Activated T-helper 1 cell treated with anti-CD3 and anti-CD28 coated beads, Interleukin-12 subunit alpha, Interleukin-12 subunit beta, Interleukin-2, Interleukin-4 antibody, amounts not matched to agents 30 ng/mL and 10 ng/mL and 1 ng/mL, durations not matched to agents 14 hours and 24 hours and 36 hours (primary cell): ENCODE measurements at regions of chr6 and their contacts with region 1.

Region 1: DNA sequence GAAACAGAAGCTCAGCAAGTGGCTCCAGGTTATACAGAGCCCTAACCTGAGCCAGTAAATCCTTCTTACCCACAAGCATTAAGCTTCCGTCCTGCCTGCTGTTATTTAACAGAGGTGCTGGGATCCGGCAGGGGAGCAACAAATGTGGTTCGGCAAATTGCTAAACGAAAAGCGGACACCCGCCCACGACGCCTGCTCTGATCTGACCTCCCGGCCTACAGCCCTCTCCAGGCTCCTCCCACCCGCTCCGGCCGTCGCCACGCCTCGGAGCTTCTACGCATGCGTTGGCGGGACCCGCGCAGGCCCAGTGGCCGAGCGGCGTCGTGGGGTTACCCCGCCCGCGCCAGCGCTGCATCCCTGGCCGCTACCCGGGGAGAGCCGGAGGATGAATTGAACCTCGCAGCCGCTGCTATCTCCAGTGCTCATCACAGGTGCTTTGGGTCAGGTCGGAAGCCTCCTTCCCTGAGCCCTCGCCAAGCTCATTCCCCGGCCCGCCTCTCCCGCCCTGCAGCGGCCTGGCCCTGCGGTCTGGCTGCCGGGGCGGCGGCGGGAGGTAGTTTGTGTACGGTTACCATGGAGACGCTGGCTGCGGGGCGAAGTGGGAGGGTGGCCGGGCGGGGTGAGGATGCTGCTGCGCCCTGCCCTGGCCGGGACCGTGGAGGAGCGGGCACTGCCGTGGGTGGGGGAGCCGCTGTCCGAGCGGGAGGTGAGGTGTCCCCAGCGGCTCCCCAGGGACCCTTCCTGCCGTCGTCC is at the start of gene ARMC2:
- DNase-seq: peak; percentile 88
- H3K4me3 Mint-ChIP-seq: peak within 1 kb of the TSS; percentile 89
- H3K27ac Mint-ChIP-seq: peak within 1 kb of the TSS; percentile 71
- H3K4me1 Mint-ChIP-seq: peaks cover 31% of the 10 kb centered on the region
- H3K27me3 Mint-ChIP-seq: peaks cover 25% of the 10 kb centered on the region
- total RNA-seq, gene ARMC2: 3.9 and 4.6 TPM in 2 replicates

Region 2: DNA sequence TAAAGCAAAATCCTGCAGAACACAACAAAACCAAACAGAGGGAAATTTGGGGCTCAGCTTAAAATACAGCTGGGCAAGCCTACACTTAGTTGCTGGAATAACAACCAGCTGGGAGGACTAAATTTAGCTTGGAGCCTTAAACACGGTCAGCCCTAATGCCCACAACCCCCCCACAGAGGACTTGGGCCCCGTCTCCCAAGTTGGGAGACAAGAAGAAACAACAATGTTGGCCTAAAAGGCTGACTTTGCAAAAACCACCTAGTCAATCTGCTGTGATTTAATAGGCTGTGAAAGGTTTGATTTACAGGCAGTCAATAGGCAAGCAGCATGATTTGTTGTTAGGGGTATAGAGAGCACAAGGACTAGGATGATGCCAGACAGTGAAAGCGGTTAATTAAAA is 40.4 kb before region 1 on chr6:
- intact Hi-C with region 1: no loop called
- DNase-seq: no peak
- H3K4me3 Mint-ChIP-seq: no peak overlapping the region
- H3K27ac Mint-ChIP-seq: no peak overlapping the region
- H3K4me1 Mint-ChIP-seq: peaks cover 14% of the 10 kb centered on the region
- H3K27me3 Mint-ChIP-seq: peaks cover 4% of the 10 kb centered on the region

Region 3: GRCh38 chr6:108835218-108835850 is 13.0 kb before region 1 on chr6:
- intact Hi-C with region 1: loop called (anchors 1 kb)
- DNase-seq: peak; percentile 74
- H3K4me3 Mint-ChIP-seq: no peak overlapping the region
- H3K27ac Mint-ChIP-seq: no peak overlapping the region
- H3K4me1 Mint-ChIP-seq: peaks cover 32% of the 10 kb centered on the region
- H3K27me3 Mint-ChIP-seq: peaks cover 16% of the 10 kb centered on the region

Region 4: GRCh38 chr6:108866798-108867197 is 18.5 kb after region 1 on chr6:
- intact Hi-C with region 1: loop called (anchors 2 kb)
- DNase-seq: no peak
- H3K4me3 Mint-ChIP-seq: no peak overlapping the region
- H3K27ac Mint-ChIP-seq: peak overlapping the region; percentile 37
- H3K4me1 Mint-ChIP-seq: peaks cover 32% of the 10 kb centered on the region
- H3K27me3 Mint-ChIP-seq: peaks cover 16% of the 10 kb centered on the region

Region 5: GRCh38 chr6:108874470-108875160 is 26.3 kb after region 1 on chr6:
- intact Hi-C with region 1: loop called (anchors 2 kb)
- DNase-seq: peak; percentile 51
- H3K4me3 Mint-ChIP-seq: peak overlapping the region; percentile 34
- H3K27ac Mint-ChIP-seq: peak overlapping the region; percentile 96
- H3K4me1 Mint-ChIP-seq: peaks cover 80% of the 10 kb centered on the region
- H3K27me3 Mint-ChIP-seq: peaks cover 4% of the 10 kb centered on the region

Region 6: DNA sequence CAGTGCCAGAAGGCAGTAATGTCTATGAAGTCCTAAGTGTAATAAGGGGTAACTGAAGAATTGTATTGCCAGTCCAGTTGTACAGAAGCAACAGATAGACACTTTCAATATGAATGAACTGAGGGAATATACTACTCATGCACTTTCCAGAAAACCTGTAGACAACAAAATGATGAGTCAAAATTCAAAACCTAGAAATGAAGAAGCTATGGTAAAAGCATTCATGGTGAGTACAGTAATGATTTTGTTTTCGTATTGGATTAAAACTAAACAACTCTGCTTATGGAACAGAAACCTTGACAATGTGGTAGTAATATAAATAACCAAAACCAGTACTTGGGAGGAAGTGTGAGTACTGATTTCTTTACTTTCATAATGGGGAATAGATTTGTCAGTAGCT is 34.9 kb after region 1 on chr6:
- intact Hi-C with region 1: loop called (anchors 1 kb)
- DNase-seq: no peak
- H3K4me3 Mint-ChIP-seq: peak overlapping the region; percentile 56
- H3K27ac Mint-ChIP-seq: peak overlapping the region; percentile 93
- H3K4me1 Mint-ChIP-seq: peaks cover 58% of the 10 kb centered on the region
- H3K27me3 Mint-ChIP-seq: peaks cover 28% of the 10 kb centered on the region

Region 7: GRCh38 chr6:108902382-108902792 is 54.1 kb after region 1 on chr6:
- intact Hi-C with region 1: no loop called
- DNase-seq: no peak
- H3K4me3 Mint-ChIP-seq: no peak overlapping the region
- H3K27ac Mint-ChIP-seq: peak overlapping the region; percentile 4
- H3K4me1 Mint-ChIP-seq: peaks cover 37% of the 10 kb centered on the region
- H3K27me3 Mint-ChIP-seq: peaks cover 10% of the 10 kb centered on the region

Region 8: DNA sequence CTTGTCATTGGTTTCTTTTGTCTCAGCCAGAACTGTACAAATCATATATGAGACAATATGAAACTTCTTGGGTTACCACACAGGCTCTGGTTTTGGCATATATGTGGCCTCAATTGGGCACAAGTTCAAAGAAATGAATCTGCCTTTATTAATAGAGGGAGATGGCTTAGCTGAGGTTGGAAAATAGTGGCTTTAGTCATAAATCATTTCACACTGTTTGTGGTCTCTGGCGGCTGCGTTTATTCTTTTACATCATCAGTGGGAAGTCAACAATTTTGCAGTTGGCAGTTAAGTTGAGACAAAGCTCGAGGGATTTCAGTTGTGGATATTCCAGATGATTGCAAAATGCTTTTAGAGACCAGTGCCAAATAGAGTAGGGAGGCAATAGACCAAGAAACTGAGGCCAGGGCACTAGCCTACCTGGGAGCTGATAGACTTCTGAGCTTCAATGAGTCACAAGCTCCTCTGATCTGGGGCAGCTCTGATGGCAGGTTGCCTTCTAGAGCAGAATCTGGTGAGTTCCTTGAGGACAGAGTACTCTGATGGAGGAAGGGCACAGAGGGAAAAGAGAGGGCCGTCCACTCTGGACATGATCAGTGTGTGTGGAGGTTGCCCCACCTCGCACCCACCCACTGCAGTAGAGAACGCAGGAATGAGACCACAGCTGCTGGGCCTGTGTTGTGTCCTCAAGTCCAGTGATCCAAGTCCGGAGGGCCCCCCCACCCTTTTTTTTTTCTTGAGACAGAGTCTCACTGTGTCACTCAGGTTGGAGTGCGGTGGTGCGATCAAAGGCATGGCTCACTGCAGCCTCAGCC is 73.5 kb after region 1 on chr6:
- intact Hi-C with region 1: loop called (anchors 1 kb)
- DNase-seq: no peak
- H3K4me3 Mint-ChIP-seq: peak overlapping the region; percentile 8
- H3K27ac Mint-ChIP-seq: peak overlapping the region; percentile 63
- H3K4me1 Mint-ChIP-seq: peaks cover 34% of the 10 kb centered on the region
- H3K27me3 Mint-ChIP-seq: peaks cover 22% of the 10 kb centered on the region

Region 9: DNA sequence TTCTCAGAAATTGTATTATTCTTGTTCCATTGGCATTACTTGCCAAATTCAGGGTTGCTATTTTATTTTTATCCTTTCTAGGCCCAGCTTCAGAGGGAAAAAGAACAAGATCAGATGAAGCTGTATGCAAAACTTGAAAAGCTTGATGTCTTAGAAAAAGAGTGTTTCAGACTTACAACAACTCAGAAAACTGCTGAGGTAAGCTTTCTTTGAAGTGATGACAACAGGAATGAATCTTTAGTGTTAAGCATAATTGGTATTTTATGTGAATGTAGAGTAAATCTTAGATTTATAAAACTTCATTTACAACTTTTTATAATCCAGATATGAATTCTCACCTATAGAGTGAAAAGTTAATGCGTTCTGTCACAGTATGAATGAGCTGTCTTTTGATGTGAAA is 305.5 kb after region 1 on chr6:
- intact Hi-C with region 1: no loop called
- DNase-seq: no peak
- H3K4me3 Mint-ChIP-seq: no peak overlapping the region
- H3K27ac Mint-ChIP-seq: no peak overlapping the region
- H3K4me1 Mint-ChIP-seq: no peaks in the 10 kb centered on the region
- H3K27me3 Mint-ChIP-seq: no peaks in the 10 kb centered on the region

Region 10: DNA sequence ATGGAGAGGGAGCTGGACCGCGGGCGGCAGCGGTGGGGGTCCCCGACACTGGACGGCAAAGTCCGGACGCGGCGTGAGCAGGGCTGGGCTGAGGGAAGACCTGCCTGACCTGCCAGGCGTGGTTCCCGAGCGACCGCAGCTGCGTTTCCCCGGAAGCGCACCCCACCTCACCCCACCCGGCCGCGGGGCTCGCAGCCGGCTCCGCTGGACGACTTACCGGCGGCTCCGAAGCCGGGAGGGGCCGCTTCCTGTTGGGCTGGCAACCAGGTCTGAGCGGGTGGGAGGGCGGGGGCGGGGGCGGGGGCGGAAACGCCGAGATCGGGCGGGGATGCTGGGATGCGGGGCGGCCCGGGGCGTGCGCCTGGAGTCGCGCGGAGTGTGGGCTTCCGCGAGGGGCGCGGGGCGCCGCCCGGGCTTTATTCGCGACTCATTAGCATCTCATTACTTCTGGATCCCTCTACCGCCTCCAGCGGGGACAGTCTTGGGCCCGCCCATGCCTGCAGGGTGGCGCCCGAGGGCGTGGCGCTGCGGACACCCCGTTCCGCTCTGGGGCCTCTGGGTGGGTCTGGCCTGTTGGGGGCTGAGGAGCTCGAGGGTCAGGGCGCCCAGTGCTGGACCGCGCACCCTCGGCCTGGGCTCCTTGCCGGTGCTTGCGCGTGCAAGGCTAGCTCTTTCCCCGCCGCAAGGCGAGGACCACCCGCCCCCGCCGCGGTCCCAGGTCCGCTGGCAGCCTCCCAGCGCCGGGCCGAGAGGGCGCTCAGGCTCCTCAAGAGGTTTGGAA is 607.4 kb after region 1 on chr6 and contains the start of gene MICAL1:
- intact Hi-C with region 1: loop called (anchors 10 kb)
- DNase-seq: peak; percentile 69
- H3K4me3 Mint-ChIP-seq: peak within 1 kb of the TSS; percentile 97
- H3K27ac Mint-ChIP-seq: peak within 1 kb of the TSS; percentile 97
- H3K4me1 Mint-ChIP-seq: peaks cover 59% of the 10 kb centered on the region
- H3K27me3 Mint-ChIP-seq: no peaks in the 10 kb centered on the region
- total RNA-seq, gene MICAL1: 40.8 and 47.1 TPM in 2 replicates